ENCODE measurements at regions of chr3 and their contacts with region 1.

Region 1: DNA sequence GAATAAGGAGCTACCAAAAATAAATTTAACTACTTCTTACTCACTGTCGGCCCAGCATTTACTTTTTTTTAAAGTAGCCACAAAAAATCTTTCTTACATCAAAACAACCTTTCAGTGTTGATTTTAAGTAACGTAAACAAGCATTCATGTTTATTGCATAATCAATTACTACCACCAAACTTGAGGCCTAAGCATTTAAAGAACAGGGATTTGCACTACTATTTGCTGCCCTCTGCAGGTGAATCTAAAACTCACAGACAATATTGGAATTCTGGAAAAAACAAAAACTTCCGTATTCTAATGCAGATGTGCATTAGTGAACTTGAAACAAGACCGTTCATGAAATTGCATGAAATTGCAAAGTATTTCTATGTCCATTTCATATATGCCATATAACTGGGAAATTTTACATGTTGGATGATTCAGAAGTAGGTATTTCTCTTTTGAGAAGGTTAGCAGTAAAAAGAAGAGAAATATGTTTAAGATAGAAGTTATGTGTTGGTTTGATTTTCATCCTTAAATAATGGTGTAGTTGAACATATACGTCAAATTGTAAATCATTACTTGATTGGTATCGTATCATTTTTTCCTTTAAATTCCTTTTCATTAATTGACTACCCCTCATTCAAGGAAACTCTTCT is 55.6 kb downstream of the CGGBP1 start:
- DNase-seq: peak; percentile 7
- H3K4me3 Mint-ChIP-seq: no peak overlapping the region
- H3K27ac Mint-ChIP-seq: no peak overlapping the region
- H3K4me1 Mint-ChIP-seq: no peaks in the 10 kb centered on the region
- H3K27me3 Mint-ChIP-seq: no peaks in the 10 kb centered on the region

Region 2: GRCh38 chr3:86774082-86774691 is 1229.0 kb before region 1 on chr3:
- CTCF ChIA-PET with region 1: no interaction called
- intact Hi-C with region 1: loop called (anchors 10 kb)
- DNase-seq: no peak
- H3K4me3 Mint-ChIP-seq: no peak overlapping the region
- H3K27ac Mint-ChIP-seq: no peak overlapping the region
- H3K4me1 Mint-ChIP-seq: no peaks in the 10 kb centered on the region
- H3K27me3 Mint-ChIP-seq: no peaks in the 10 kb centered on the region

Region 3: GRCh38 chr3:87298111-87298718 is 705.0 kb before region 1 on chr3:
- CTCF ChIA-PET with region 1: interaction called, 4 read pairs
- intact Hi-C with region 1: loop called (anchors 1 kb)
- DNase-seq: no peak
- H3K4me3 Mint-ChIP-seq: no peak overlapping the region
- H3K27ac Mint-ChIP-seq: no peak overlapping the region
- H3K4me1 Mint-ChIP-seq: no peaks in the 10 kb centered on the region
- H3K27me3 Mint-ChIP-seq: no peaks in the 10 kb centered on the region

Region 4: GRCh38 chr3:87503900-87504508 is 499.2 kb before region 1 on chr3:
- CTCF ChIA-PET with region 1: no interaction called
- intact Hi-C with region 1: loop called (anchors 2 kb)
- DNase-seq: peak; percentile 22
- H3K4me3 Mint-ChIP-seq: no peak overlapping the region
- H3K27ac Mint-ChIP-seq: no peak overlapping the region
- H3K4me1 Mint-ChIP-seq: no peaks in the 10 kb centered on the region
- H3K27me3 Mint-ChIP-seq: no peaks in the 10 kb centered on the region

Region 5: GRCh38 chr3:87900061-87900460 is 103.2 kb before region 1 on chr3:
- CTCF ChIA-PET with region 1: no interaction called
- intact Hi-C with region 1: loop called (anchors 1 kb)
- DNase-seq: no peak
- H3K4me3 Mint-ChIP-seq: no peak overlapping the region
- H3K27ac Mint-ChIP-seq: no peak overlapping the region
- H3K4me1 Mint-ChIP-seq: no peaks in the 10 kb centered on the region
- H3K27me3 Mint-ChIP-seq: no peaks in the 10 kb centered on the region

Region 6: DNA sequence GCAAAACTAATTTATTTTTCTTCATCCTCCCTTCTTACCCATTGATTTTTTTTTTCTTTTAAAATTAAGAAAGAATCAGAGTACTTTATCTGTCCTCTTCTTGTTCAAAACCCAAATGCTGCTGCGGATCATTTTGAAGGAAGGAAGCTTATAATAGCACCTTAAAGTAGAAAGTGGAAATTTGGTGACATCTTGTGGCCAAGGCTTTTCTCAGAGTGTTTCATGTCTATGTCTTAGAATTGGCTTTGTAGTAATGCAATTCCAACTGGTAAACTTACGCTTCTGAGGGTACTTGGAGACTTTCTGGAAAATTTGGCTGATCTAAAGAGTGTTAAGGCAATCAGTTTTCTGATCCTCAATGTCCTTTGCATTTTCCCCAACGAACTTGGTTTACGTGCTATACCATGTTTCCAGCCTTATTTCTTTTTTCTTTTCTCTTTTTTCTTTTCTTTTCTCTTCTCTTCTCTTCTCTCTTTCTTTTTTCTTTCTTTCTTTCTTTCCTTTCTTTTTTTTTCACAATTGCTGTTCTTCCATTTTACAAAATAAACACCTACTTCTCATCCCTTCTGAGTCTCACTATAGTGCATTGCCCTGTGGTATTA is 177.3 kb after region 1 on chr3:
- CTCF ChIA-PET with region 1: interaction called, 4 read pairs
- intact Hi-C with region 1: loop called (anchors 1 kb)
- DNase-seq: peak; percentile 62
- H3K4me3 Mint-ChIP-seq: no peak overlapping the region
- H3K27ac Mint-ChIP-seq: no peak overlapping the region
- H3K4me1 Mint-ChIP-seq: no peaks in the 10 kb centered on the region
- H3K27me3 Mint-ChIP-seq: no peaks in the 10 kb centered on the region